ENCODE measurements at regions of chr6 and their contacts with region 1.

Region 1: GRCh38 chr6:132218059-132218696 is 183.1 kb downstream of the MOXD1 start:
- DNase-seq: no peak
- H3K4me3 Mint-ChIP-seq: no peak overlapping the region
- H3K27ac Mint-ChIP-seq: no peak overlapping the region
- H3K4me1 Mint-ChIP-seq: peaks cover 8% of the 10 kb centered on the region
- H3K27me3 Mint-ChIP-seq: no peaks in the 10 kb centered on the region
- CTCF ChIP-seq: peak; percentile 35

Region 2: GRCh38 chr6:131923356-131923755 is 294.8 kb before region 1 on chr6:
- CTCF ChIA-PET with region 1: interaction called, 27 read pairs
- intact Hi-C with region 1: loop called (anchors 1 kb)
- DNase-seq: peak; percentile 61
- H3K4me3 Mint-ChIP-seq: no peak overlapping the region
- H3K27ac Mint-ChIP-seq: no peak overlapping the region
- H3K4me1 Mint-ChIP-seq: no peaks in the 10 kb centered on the region
- H3K27me3 Mint-ChIP-seq: no peaks in the 10 kb centered on the region
- CTCF ChIP-seq: peak; percentile 62

Region 3: GRCh38 chr6:131949909-131950766 is 268.0 kb before region 1 on chr6:
- CTCF ChIA-PET with region 1: interaction called, 12 read pairs
- intact Hi-C with region 1: loop called (anchors 10 kb)
- DNase-seq: peak; percentile 80
- H3K4me3 Mint-ChIP-seq: peak overlapping the region; percentile 85
- H3K27ac Mint-ChIP-seq: peak overlapping the region; percentile 94
- H3K4me1 Mint-ChIP-seq: peaks cover 54% of the 10 kb centered on the region
- H3K27me3 Mint-ChIP-seq: no peaks in the 10 kb centered on the region
- CTCF ChIP-seq: no peak

Region 4: DNA sequence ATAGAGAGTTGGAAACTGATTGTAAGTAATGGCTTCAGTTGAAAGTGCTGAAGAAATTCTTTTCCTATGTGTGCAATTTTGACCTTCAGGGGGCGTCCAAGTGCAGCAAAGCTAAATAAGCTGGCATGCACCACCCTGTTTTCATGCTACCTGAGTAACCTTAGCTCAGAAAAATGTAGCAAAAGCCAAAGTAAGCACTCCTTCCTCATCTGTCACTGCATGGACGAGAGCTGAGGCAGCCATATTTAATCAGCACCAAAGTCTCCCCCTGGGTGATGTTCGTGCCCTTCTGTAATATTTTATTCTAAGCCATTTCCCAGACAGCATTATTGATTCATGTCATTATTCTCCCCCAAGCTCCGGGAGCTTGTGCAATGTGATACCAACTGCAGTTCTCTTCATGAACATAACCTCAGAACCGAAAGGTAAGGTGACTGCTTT is 719.3 kb after region 1 on chr6:
- CTCF ChIA-PET with region 1: interaction called, 11 read pairs
- intact Hi-C with region 1: no loop called
- DNase-seq: peak; percentile 80
- H3K4me3 Mint-ChIP-seq: peak overlapping the region; percentile 48
- H3K27ac Mint-ChIP-seq: no peak overlapping the region
- H3K4me1 Mint-ChIP-seq: peaks cover 8% of the 10 kb centered on the region
- H3K27me3 Mint-ChIP-seq: no peaks in the 10 kb centered on the region
- CTCF ChIP-seq: peak; percentile 58

Measured in Calu3 (cell line).